Activated CD4-positive, alpha-beta T cell treated with anti-CD3 and anti-CD28 coated beads, Interleukin-2, amount 10 ng/mL, durations not matched to agents 7 days and 5 days (primary cell): ENCODE measurements at regions of chr3 and their contacts with region 1.

Region 1: DNA sequence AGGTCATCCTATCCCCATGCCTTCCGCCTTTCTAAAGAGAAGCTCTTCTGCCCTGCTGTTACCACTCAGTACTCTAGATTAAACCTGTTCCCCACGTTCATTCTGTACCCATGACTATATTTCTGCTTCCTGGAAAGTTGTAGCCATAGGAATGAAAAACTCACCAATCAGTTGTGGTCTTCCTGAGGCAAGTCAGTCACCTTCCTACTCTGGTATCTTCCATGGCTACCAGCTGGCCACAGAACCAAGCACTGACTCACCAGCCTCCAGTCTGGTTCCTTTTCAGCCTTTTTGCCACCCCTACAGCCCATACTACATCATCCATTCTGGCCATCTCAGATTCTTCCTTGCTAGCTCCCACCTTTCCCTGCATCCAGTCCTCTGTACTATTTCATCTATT is 46.4 kb downstream of the TMEM44 start:
- DNase-seq: no peak
- H3K4me3 Mint-ChIP-seq: no peak overlapping the region
- H3K27ac Mint-ChIP-seq: no peak overlapping the region
- H3K4me1 Mint-ChIP-seq: peaks cover 20% of the 10 kb centered on the region
- H3K27me3 Mint-ChIP-seq: no peaks in the 10 kb centered on the region

Region 2: DNA sequence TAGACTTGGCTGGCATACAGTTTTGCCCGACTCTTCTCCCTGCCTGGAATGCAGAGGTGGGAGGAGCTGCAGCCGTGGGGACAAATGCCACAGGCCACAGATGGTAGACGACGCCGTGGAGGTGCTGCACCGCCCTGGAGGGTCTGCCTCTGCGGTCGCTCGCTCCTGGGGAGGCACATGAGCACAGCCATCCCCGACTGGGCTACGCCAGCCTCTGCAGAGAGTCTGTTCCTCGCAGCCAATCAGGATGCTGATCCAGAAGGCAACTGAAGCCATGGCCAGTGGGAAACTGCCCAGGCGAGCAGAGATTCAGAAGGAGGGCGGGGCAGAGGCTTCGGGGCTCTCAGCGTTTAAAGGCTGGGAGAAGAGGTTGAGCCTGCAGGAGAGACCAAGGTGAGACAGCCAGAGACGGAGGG is 205.4 kb before region 1 on chr3:
- CTCF ChIA-PET with region 1: no interaction called
- POLR2A ChIA-PET with region 1: no interaction called
- DNase-seq: no peak
- H3K4me3 Mint-ChIP-seq: no peak overlapping the region
- H3K27ac Mint-ChIP-seq: no peak overlapping the region
- H3K4me1 Mint-ChIP-seq: no peaks in the 10 kb centered on the region
- H3K27me3 Mint-ChIP-seq: peaks cover 3% of the 10 kb centered on the region

Region 3: GRCh38 chr3:194596906-194597305 is 10.1 kb after region 1 on chr3:
- CTCF ChIA-PET with region 1: interaction called, 12 read pairs
- POLR2A ChIA-PET with region 1: no interaction called
- DNase-seq: no peak
- H3K4me3 Mint-ChIP-seq: no peak overlapping the region
- H3K27ac Mint-ChIP-seq: no peak overlapping the region
- H3K4me1 Mint-ChIP-seq: peaks cover 5% of the 10 kb centered on the region
- H3K27me3 Mint-ChIP-seq: no peaks in the 10 kb centered on the region

Region 4: GRCh38 chr3:194617827-194618226 is 31.0 kb after region 1 on chr3:
- CTCF ChIA-PET with region 1: no interaction called
- POLR2A ChIA-PET with region 1: no interaction called
- DNase-seq: no peak
- H3K4me3 Mint-ChIP-seq: no peak overlapping the region
- H3K27ac Mint-ChIP-seq: no peak overlapping the region
- H3K4me1 Mint-ChIP-seq: no peaks in the 10 kb centered on the region
- H3K27me3 Mint-ChIP-seq: no peaks in the 10 kb centered on the region

Region 5: GRCh38 chr3:194661374-194661773 is 74.5 kb after region 1 on chr3:
- CTCF ChIA-PET with region 1: no interaction called
- POLR2A ChIA-PET with region 1: no interaction called
- DNase-seq: no peak
- H3K4me3 Mint-ChIP-seq: no peak overlapping the region
- H3K27ac Mint-ChIP-seq: no peak overlapping the region
- H3K4me1 Mint-ChIP-seq: peaks cover 19% of the 10 kb centered on the region
- H3K27me3 Mint-ChIP-seq: no peaks in the 10 kb centered on the region